MCF 10A (cell line): ENCODE measurements at regions of chr6 and their contacts with region 1.

Region 1: DNA sequence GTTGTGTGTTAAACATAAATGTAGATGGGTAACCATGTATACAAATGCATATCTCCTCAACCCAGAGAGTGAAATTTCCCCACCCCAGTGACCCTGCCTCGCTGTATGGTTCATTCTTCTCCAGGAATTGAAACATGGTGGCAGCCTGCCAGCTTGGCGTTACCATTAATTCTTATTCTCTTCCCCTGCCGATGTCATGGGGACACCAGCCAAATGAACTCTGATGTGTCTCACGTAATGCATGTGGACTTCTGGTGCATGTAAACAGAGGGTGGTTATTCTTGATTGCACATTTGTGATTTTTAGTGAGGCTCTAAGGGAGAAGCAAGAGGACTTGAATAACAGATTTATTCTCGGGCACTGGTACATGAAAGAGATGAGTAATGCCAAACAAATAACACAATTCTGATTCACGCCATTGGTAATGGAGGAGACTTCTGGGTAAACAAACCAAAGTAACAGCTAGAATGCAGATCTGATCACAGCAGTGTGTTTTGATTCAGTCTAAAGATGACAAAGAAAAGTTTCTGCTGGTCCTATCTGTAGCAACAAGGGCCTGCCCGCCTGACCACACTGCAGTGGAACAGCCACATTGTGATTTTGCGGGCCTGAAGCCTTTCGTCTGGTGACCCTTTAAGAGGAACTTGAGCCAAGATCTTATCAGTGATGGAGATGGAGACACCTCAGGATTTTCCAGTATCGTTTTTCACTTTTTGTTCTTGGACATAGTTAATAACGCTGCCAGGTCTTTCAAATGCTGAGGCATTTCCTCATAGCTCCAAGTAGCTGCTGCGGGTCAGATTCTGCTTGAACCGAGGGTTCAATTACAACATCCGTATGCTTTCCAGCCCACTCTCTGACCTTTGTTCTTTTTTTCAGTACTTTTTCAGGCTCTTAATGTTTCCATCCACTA is 171.8 kb upstream of the AKAP12 start:
- DNase-seq: peak; percentile 93
- H3K4me3 Mint-ChIP-seq: peak overlapping the region; percentile 56
- H3K27ac Mint-ChIP-seq: peak overlapping the region; percentile 97
- H3K4me1 Mint-ChIP-seq: peaks cover 30% of the 10 kb centered on the region
- H3K27me3 Mint-ChIP-seq: no peaks in the 10 kb centered on the region
- CTCF ChIP-seq: no peak

Region 2: DNA sequence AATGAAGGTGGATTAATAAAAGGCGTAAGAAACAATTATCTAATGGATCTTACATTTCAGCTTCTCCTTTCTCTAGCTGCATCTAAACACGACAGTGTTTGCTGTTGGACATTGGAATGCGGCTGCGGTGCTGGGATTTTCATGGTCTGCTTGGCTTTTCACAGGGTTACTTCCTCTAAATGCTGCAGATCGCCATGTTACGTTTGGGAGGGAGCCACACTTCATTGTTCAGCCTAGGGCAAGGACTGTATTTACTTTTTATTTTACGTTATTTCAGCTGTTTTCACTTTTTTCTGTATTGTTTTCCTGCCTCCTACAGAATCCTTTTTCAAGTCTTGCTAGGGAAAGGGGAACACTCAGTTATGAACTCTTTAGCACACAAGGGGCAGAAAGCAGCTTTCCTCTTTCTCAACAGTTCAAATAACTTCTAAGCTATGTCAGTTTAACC is 300.3 kb before region 1 on chr6:
- CTCF ChIA-PET with region 1: no interaction called
- POLR2A ChIA-PET with region 1: no interaction called
- intact Hi-C with region 1: no loop called
- DNase-seq: no peak
- H3K4me3 Mint-ChIP-seq: no peak overlapping the region
- H3K27ac Mint-ChIP-seq: no peak overlapping the region
- H3K4me1 Mint-ChIP-seq: no peaks in the 10 kb centered on the region
- H3K27me3 Mint-ChIP-seq: no peaks in the 10 kb centered on the region
- CTCF ChIP-seq: no peak

Region 3: GRCh38 chr6:151036869-151037680 is 30.9 kb before region 1 on chr6:
- CTCF ChIA-PET with region 1: no interaction called
- POLR2A ChIA-PET with region 1: interaction called, 16 read pairs
- intact Hi-C with region 1: no loop called
- DNase-seq: peak; percentile 21
- H3K4me3 Mint-ChIP-seq: peak overlapping the region; percentile 38
- H3K27ac Mint-ChIP-seq: peak overlapping the region; percentile 84
- H3K4me1 Mint-ChIP-seq: peaks cover 27% of the 10 kb centered on the region
- H3K27me3 Mint-ChIP-seq: no peaks in the 10 kb centered on the region
- CTCF ChIP-seq: no peak

Region 4: GRCh38 chr6:151052021-151052646 is 15.8 kb before region 1 on chr6:
- CTCF ChIA-PET with region 1: interaction called, 8 read pairs
- POLR2A ChIA-PET with region 1: interaction called, 18 read pairs
- intact Hi-C with region 1: no loop called
- DNase-seq: peak; percentile 95
- H3K4me3 Mint-ChIP-seq: no peak overlapping the region
- H3K27ac Mint-ChIP-seq: peak overlapping the region; percentile 73
- H3K4me1 Mint-ChIP-seq: peaks cover 16% of the 10 kb centered on the region
- H3K27me3 Mint-ChIP-seq: no peaks in the 10 kb centered on the region
- CTCF ChIP-seq: no peak

Region 5: DNA sequence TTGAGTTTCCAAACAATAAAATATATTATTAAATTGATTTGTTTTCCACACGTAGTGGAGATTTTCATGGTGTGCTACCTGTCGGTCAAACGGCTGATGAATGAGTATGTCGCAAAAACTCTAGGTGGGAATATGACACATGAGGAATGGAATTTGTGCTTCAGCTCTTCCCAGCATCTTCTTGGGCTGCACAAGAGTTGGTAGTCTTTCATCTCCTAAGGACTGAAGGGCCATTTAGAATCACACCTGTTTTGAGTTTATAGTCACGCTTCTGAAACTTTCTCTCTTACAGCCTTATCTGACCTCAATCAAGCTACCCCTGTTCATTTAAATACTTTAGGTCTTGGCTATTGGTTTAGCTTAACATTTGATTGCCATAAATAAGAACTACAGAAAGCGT is 14.1 kb after region 1 on chr6:
- CTCF ChIA-PET with region 1: interaction called, 13 read pairs
- POLR2A ChIA-PET with region 1: interaction called, 28 read pairs
- intact Hi-C with region 1: no loop called
- DNase-seq: peak; percentile 64
- H3K4me3 Mint-ChIP-seq: no peak overlapping the region
- H3K27ac Mint-ChIP-seq: no peak overlapping the region
- H3K4me1 Mint-ChIP-seq: peaks cover 25% of the 10 kb centered on the region
- H3K27me3 Mint-ChIP-seq: no peaks in the 10 kb centered on the region
- CTCF ChIP-seq: no peak

Region 6: DNA sequence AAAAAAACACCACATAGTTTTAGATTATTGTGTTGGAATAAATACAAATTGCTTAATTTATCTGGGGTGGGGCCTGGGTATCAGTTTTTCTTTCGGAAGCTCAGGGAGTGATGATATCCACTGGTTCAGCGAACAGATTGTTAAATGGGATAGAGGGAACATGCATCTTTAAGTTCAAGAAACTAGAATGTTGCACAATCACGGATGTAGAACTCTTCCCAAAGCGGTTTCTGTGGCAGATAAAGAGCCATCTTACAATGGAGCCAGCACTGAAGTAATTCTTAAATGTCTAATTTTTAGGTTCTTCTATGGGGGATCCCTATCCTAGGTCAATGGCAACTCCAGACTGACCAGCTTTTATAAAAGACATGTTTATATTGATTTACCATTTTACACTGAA is 393.7 kb after region 1 on chr6:
- CTCF ChIA-PET with region 1: no interaction called
- POLR2A ChIA-PET with region 1: no interaction called
- intact Hi-C with region 1: no loop called
- DNase-seq: no peak
- H3K4me3 Mint-ChIP-seq: no peak overlapping the region
- H3K27ac Mint-ChIP-seq: no peak overlapping the region
- H3K4me1 Mint-ChIP-seq: peaks cover 6% of the 10 kb centered on the region
- H3K27me3 Mint-ChIP-seq: no peaks in the 10 kb centered on the region
- CTCF ChIP-seq: no peak